ENCODE measurements at regions of chr3 and their contacts with region 1.

Region 1: DNA sequence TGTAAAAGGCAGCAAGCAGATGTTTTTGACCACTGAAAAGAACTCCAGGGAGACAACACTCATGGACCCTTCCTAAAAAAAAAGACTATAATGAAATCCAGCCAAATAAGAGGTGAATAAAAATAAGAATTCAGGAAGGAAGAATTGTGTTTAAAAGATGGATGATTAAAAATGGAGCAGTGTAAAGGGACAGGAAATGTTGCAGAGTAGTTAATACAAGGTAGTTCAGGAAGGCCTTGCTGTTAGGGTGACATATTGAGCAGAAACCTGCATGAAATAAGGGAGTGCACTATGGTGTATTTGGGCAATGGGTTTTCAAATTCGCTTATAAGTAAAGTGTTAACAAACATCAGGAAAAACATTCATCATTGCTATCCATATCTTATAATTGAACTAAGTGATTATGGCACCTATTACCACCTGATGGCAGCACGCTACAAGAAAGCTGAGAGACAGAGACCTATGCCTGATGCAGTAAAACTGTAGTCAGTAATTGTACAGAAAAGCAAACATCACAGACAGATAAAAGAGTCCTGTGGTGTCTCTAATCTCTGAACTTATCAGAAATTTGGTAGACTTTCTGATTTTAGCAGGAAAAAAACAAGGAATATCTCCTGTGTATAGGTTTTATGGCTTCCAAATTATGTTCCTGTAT is 5.8 kb upstream of the DBR1 start:
- DNase-seq: no peak
- H3K4me3 ChIP-seq: no peak overlapping the region
- H3K27ac ChIP-seq: no peak overlapping the region
- H3K4me1 ChIP-seq: peaks cover 0 to under 1% (median 0%) of the 10 kb centered on the region in 4 donors
- H3K27me3 ChIP-seq: no peaks in the 10 kb centered on the region
- CTCF ChIP-seq: no peak

Region 2: GRCh38 chr3:138009476-138010272 is 170.8 kb before region 1 on chr3 and contains the start of gene CLDN18:
- intact Hi-C with region 1: no loop called
- DNase-seq: no peak
- H3K4me3 ChIP-seq: no peak within 1 kb of the TSS
- H3K27ac ChIP-seq: no peak within 1 kb of the TSS
- H3K4me1 ChIP-seq: peaks cover 0 to 9% (median 2%) of the 10 kb centered on the region in 4 donors
- H3K27me3 ChIP-seq: no peaks in the 10 kb centered on the region
- CTCF ChIP-seq: no peak

Region 3: GRCh38 chr3:138089091-138089490 is 91.4 kb before region 1 on chr3:
- intact Hi-C with region 1: no loop called
- DNase-seq: no peak
- H3K4me3 ChIP-seq: no peak overlapping the region
- H3K27ac ChIP-seq: no peak overlapping the region
- H3K4me1 ChIP-seq: no peaks in the 10 kb centered on the region
- H3K27me3 ChIP-seq: no peaks in the 10 kb centered on the region
- CTCF ChIP-seq: no peak

Region 4: GRCh38 chr3:138227650-138228049 is 47.1 kb after region 1 on chr3:
- intact Hi-C with region 1: loop called (anchors 1 kb)
- DNase-seq: no peak
- H3K4me3 ChIP-seq: no peak overlapping the region
- H3K27ac ChIP-seq: no peak overlapping the region
- H3K4me1 ChIP-seq: peaks cover 0 to 3% (median 1%) of the 10 kb centered on the region in 4 donors
- H3K27me3 ChIP-seq: no peaks in the 10 kb centered on the region
- CTCF ChIP-seq: no peak

Region 5: DNA sequence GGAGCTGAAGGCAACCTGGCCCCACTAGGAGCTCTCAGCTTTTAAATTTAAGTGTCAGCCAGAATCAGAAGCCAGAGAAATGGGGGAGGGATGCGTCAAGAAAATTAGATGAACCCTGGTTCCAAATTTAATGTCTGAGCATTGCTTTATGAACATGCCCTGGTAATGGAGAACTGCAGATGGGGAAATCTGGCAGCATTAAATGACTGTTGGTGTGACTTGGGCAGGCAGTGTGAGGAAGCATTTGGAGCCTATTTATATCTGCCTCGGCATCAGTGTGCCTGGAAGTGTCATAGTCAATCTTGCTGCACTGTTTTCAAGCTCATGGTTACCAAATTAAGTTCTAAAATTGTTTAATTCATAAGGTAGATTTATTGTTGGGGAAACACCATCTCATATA is 120.1 kb after region 1 on chr3:
- intact Hi-C with region 1: no loop called
- DNase-seq: no peak
- H3K4me3 ChIP-seq: no peak overlapping the region
- H3K27ac ChIP-seq: no peak overlapping the region
- H3K4me1 ChIP-seq: no peaks in the 10 kb centered on the region
- H3K27me3 ChIP-seq: no peaks in the 10 kb centered on the region
- CTCF ChIP-seq: no peak